ENCODE measurements at regions of chr6 and their contacts with region 1.

Region 1: GRCh38 chr6:15691250-15691869 is 28.5 kb upstream of the DTNBP1 start:
- DNase-seq: peak; percentile 85 to 97
- H3K4me3 ChIP-seq: peak overlapping the region; percentile 30 to 35 (median 32)
- H3K27ac ChIP-seq: peak overlapping the region in 4 of 5 donors; percentile 31 to 63 (median 44)
- H3K4me1 ChIP-seq: peaks cover 12 to 24% (median 20%) of the 10 kb centered on the region in 4 donors
- H3K27me3 ChIP-seq: no peaks in the 10 kb centered on the region
- CTCF ChIP-seq: peak in 6 of 7 experiments; percentile 75 to 100 (median 98)
- EP300 ChIP-seq: no peak
- POLR2A ChIP-seq: no peak

Region 2: GRCh38 chr6:16206595-16207037 is 515.3 kb after region 1 on chr6:
- intact Hi-C with region 1: loop called (anchors 5 kb)
- DNase-seq: peak; percentile 67 to 88
- H3K4me3 ChIP-seq: no peak overlapping the region
- H3K27ac ChIP-seq: no peak overlapping the region
- H3K4me1 ChIP-seq: peaks cover 0 to 4% (median 0%) of the 10 kb centered on the region in 4 donors
- H3K27me3 ChIP-seq: peaks cover 0 to 7% (median 0%) of the 10 kb centered on the region in 3 donors
- CTCF ChIP-seq: peak in 5 of 7 experiments; percentile 89 to 97 (median 94)
- EP300 ChIP-seq: no peak
- POLR2A ChIP-seq: no peak

Measured in stomach (tissue), 19 donors.